ENCODE measurements at regions of chr9 and their contacts with region 1.

Region 1: GRCh38 chr9:98315551-98316060 is 60.2 kb upstream of the TBC1D2 start:
- DNase-seq: peak; percentile 66 to 86 (median 79)
- ATAC-seq: peak; percentile 93 to 99 (median 96)
- H3K4me3 ChIP-seq: no peak overlapping the region
- H3K27ac ChIP-seq: no peak overlapping the region
- H3K4me1 ChIP-seq: no peaks in the 10 kb centered on the region
- H3K27me3 ChIP-seq: no peaks in the 10 kb centered on the region
- CTCF ChIP-seq: peak; percentile 63 to 88 (median 82)

Region 2: GRCh38 chr9:98168941-98169488 is 146.6 kb before region 1 on chr9:
- intact Hi-C with region 1: no loop called
- DNase-seq: no peak
- ATAC-seq: peak in 3 of 4 donors; percentile 25 to 70 (median 65)
- H3K4me3 ChIP-seq: no peak overlapping the region
- H3K27ac ChIP-seq: no peak overlapping the region
- H3K4me1 ChIP-seq: no peaks in the 10 kb centered on the region
- H3K27me3 ChIP-seq: no peaks in the 10 kb centered on the region
- CTCF ChIP-seq: no peak

Region 3: GRCh38 chr9:98185611-98186171 is 129.9 kb before region 1 on chr9:
- intact Hi-C with region 1: no loop called
- DNase-seq: no peak
- ATAC-seq: no peak
- H3K4me3 ChIP-seq: no peak overlapping the region
- H3K27ac ChIP-seq: no peak overlapping the region
- H3K4me1 ChIP-seq: no peaks in the 10 kb centered on the region
- H3K27me3 ChIP-seq: no peaks in the 10 kb centered on the region
- CTCF ChIP-seq: no peak

Region 4: GRCh38 chr9:98455256-98456155 is 139.9 kb after region 1 on chr9:
- intact Hi-C with region 1: no loop called
- DNase-seq: no peak
- ATAC-seq: no peak
- H3K4me3 ChIP-seq: no peak overlapping the region
- H3K27ac ChIP-seq: no peak overlapping the region
- H3K4me1 ChIP-seq: no peaks in the 10 kb centered on the region
- H3K27me3 ChIP-seq: no peaks in the 10 kb centered on the region
- CTCF ChIP-seq: no peak

Region 5: GRCh38 chr9:98775831-98776441 is 460.3 kb after region 1 on chr9:
- intact Hi-C with region 1: loop called in 2 of 3 experiments (anchors 5 kb)
- DNase-seq: no peak
- ATAC-seq: peak in 3 of 4 donors; percentile 50 to 70 (median 50)
- H3K4me3 ChIP-seq: no peak overlapping the region
- H3K27ac ChIP-seq: no peak overlapping the region
- H3K4me1 ChIP-seq: no peaks in the 10 kb centered on the region
- H3K27me3 ChIP-seq: no peaks in the 10 kb centered on the region
- CTCF ChIP-seq: peak; percentile 11 to 47 (median 33)